Caki2 (cell line): ENCODE measurements at regions of chr19 and their contacts with region 1.

Region 1: DNA sequence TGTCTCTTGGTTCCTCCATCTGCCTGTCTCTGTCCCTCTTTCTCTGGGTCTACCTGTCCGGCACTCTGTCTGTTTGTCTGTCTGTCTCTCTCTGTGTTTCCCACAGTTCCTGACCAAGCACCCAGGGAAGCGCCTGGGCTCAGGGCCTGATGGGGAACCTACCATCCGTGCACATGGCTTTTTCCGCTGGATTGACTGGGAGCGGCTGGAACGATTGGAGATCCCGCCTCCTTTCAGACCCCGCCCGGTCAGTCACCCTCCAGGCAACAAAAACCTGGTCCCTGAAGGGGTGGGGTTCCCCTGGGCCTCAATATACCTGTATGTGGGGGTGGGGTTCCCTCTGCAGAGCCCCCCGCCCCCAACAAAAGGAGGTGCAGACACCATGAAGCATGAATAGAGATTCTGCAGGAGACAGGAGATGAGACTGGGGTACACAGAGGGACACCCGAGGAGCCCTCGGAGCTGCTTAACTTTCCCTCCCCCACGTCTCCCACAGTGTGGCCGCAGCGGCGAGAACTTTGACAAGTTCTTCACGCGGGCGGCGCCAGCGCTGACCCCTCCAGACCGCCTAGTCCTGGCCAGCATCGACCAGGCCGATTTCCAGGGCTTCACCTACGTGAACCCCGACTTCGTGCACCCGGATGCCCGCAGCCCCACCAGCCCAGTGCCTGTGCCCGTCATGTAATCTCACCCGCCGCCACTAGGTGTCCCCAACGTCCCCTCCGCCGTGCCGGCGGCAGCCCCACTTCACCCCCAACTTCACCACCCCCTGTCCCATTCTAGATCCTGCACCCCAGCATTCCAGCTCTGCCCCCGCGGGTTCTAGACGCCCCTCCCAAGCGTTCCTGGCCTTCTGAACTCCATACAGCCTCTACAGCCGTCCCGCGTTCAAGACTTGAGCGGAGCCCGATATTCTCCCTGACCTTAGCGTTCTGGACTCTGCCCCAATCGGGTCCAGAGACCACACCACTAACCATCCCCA is 2.6 kb upstream of the CACNG7 start:
- DNase-seq: no peak

Region 2: GRCh38 chr19:53958168-53958571 is 51.7 kb after region 1 on chr19:
- in situ Hi-C with region 1: loop called (anchors 10 kb)
- DNase-seq: no peak